B cell (primary cell): ENCODE measurements at regions of chr1 and their contacts with region 1.

Region 1: DNA sequence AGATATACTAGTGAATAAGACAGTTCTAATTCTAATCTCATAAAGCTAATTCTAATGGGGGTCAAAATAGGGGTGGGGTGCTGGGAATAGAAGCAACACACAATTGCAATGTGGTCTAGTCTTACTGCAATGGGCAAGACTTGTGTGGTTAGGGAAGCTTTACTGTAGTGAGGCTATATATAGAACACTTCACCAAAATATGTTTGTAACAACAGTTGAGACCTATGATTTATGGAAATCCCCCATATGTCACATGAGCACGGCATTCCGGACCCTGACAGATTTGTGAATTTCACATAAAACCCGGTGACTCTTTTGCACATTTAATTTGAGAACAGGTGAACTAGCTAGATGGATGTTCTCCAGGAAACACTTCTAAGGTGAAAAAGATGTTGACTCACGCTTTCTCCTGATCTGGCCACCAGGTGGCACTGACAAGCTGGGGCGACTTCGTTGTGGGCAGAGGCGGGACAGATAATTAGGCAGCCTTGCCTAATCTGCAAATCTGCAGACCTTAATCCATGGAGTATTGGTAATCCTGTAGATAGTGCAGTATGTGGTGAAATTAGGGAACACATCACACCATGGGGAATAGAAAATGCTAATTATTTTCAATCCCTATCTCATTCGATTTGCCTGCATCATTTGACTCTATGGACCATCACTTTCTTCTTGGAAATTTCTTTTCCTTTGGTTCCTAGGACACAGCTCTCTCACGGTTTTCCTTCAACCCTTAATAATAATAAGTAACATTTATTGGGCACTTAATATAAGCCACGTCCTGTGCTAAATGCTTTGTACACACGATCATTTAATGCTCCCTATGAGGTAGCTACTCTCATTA is 37.7 kb downstream of the KIAA0040 start:
- DNase-seq: peak; percentile 81
- ATAC-seq: peak; percentile 64
- H3K4me3 ChIP-seq: no peak overlapping the region
- H3K4me3 Mint-ChIP-seq: no peak overlapping the region
- H3K27ac ChIP-seq: no peak overlapping the region
- H3K27ac Mint-ChIP-seq: no peak overlapping the region
- H3K4me1 ChIP-seq: peaks cover 16 to 27% of the 10 kb centered on the region in 2 donors
- H3K4me1 Mint-ChIP-seq: peaks cover 34% of the 10 kb centered on the region
- H3K27me3 ChIP-seq: peaks cover 0 to 16% (median 7%) of the 10 kb centered on the region in 4 experiments
- H3K27me3 Mint-ChIP-seq: peaks cover 18% of the 10 kb centered on the region
- CTCF ChIP-seq: peak; percentile 92

Region 2: GRCh38 chr1:175169305-175170018 is 14.6 kb after region 1 on chr1:
- CTCF ChIA-PET with region 1: interaction called, 16 read pairs
- POLR2A ChIA-PET with region 1: no interaction called
- intact Hi-C with region 1: no loop called
- DNase-seq: no peak
- ATAC-seq: no peak
- H3K4me3 ChIP-seq: no peak overlapping the region
- H3K4me3 Mint-ChIP-seq: no peak overlapping the region
- H3K27ac ChIP-seq: peak overlapping the region in 1 of 2 donors; percentile 40
- H3K27ac Mint-ChIP-seq: peak overlapping the region; percentile 77
- H3K4me1 ChIP-seq: peaks cover 23 to 25% of the 10 kb centered on the region in 2 donors
- H3K4me1 Mint-ChIP-seq: peaks cover 67% of the 10 kb centered on the region
- H3K27me3 ChIP-seq: no peaks in the 10 kb centered on the region
- H3K27me3 Mint-ChIP-seq: no peaks in the 10 kb centered on the region
- CTCF ChIP-seq: no peak

Region 3: DNA sequence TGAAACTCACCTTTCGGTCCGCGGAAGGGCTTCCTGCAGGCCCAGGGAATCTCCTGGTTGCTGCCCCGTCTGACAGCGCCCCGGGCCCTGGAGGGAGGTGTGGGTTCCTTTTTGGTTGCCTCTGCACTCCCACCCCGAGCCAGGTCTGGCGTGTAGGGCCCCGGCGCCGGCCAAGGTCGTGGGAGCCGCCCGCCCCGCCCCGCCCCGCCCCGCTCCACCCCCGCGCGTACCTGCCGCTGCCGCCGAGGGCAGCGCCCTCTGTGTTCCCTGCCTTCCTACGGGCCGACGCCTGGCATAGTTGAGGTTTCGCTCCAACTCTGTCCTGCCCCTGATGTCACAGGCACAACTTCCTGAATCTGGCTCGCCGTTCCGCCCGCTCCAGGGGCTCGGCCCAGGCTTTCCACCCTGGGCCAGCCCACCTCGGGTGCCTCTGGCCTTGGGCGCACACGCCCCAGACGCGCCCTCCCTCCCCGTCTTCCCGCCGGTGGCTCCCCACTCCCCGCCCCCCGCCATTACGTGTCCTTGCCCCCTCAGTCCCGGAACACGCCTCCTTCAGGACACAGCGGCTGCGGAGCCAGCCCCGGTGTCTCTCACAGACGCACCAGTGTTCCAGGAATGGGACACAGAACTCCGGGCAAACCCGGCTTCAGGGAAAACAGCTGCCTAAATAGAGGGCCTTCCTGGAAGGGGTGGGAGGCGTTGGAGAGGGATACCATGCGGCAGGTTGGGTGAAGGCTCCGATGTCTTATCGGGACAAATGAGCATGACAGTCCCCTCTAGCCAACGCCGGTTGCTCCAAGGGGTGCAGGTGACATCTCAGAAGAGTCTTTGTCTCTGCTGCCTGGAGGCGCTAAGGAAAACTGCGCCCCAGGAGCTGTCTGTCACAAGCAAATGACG is 38.0 kb after region 1 on chr1 and contains the start of gene KIAA0040:
- CTCF ChIA-PET with region 1: interaction called, 90 read pairs
- POLR2A ChIA-PET with region 1: interaction called, 3 read pairs
- intact Hi-C with region 1: loop called (anchors 2 kb)
- DNase-seq: peak; percentile 84
- ATAC-seq: peak; percentile 61
- H3K4me3 ChIP-seq: peak within 1 kb of the TSS; percentile 71 to 99 (median 97)
- H3K4me3 Mint-ChIP-seq: peak within 1 kb of the TSS; percentile 99
- H3K27ac ChIP-seq: peak within 1 kb of the TSS; percentile 69 to 81
- H3K27ac Mint-ChIP-seq: peak within 1 kb of the TSS; percentile 96
- H3K4me1 ChIP-seq: peaks cover 81 to 87% of the 10 kb centered on the region in 2 donors
- H3K4me1 Mint-ChIP-seq: peaks cover 88% of the 10 kb centered on the region
- H3K27me3 ChIP-seq: no peaks in the 10 kb centered on the region
- H3K27me3 Mint-ChIP-seq: no peaks in the 10 kb centered on the region
- CTCF ChIP-seq: no peak
- total RNA-seq, gene KIAA0040: 84.2 and 93.6 TPM in 2 replicates

Region 4: GRCh38 chr1:175307160-175307559 is 152.3 kb after region 1 on chr1:
- CTCF ChIA-PET with region 1: interaction called, 468 read pairs
- POLR2A ChIA-PET with region 1: no interaction called
- intact Hi-C with region 1: no loop called
- DNase-seq: peak; percentile 40
- ATAC-seq: peak; percentile 66
- H3K4me3 ChIP-seq: no peak overlapping the region
- H3K4me3 Mint-ChIP-seq: peak overlapping the region; percentile 29
- H3K27ac ChIP-seq: no peak overlapping the region
- H3K27ac Mint-ChIP-seq: peak overlapping the region; percentile 51
- H3K4me1 ChIP-seq: peaks cover 24 to 26% of the 10 kb centered on the region in 2 donors
- H3K4me1 Mint-ChIP-seq: peaks cover 35% of the 10 kb centered on the region
- H3K27me3 ChIP-seq: no peaks in the 10 kb centered on the region
- H3K27me3 Mint-ChIP-seq: no peaks in the 10 kb centered on the region
- CTCF ChIP-seq: no peak

Region 5: DNA sequence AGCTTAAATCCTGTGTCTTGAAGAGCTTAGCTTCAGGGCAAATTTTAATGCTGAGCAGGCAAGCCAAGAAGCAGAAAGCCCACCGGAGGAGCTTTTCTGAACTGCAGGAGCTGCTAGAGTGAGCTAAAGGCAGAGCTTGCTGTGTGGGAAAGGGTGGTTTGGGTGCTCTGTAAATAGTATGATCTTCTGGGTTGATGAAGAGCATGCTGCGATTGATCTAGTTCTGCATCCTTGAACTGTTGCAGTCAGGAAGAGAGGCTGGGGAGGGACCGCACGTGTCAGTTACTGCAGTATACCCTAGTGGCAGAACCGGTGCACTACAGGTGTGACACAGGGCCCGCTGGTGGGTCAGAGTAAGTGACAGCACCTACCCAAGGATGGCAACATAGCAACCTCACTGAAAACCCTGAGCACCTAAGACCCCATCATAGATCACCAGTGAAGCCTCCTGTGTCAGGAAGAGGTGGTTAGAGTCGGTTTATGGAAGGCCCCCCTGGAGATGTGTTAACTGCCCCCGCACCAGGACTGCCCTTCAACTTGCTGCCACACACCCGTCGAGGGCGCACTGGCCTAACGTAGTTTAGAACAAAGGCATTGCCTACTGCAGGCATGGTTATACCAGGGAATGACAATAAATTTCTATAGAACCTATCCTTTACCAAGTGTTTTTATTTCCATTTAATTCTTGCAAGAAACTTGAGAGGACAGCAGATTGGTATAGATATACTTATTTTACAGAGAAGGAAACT is 183.7 kb after region 1 on chr1:
- CTCF ChIA-PET with region 1: interaction called, 82 read pairs
- POLR2A ChIA-PET with region 1: no interaction called
- intact Hi-C with region 1: loop called (anchors 1 kb)
- DNase-seq: peak; percentile 66
- ATAC-seq: peak; percentile 97
- H3K4me3 ChIP-seq: no peak overlapping the region
- H3K4me3 Mint-ChIP-seq: no peak overlapping the region
- H3K27ac ChIP-seq: no peak overlapping the region
- H3K27ac Mint-ChIP-seq: no peak overlapping the region
- H3K4me1 ChIP-seq: peaks cover 0 to 2% of the 10 kb centered on the region in 2 donors
- H3K4me1 Mint-ChIP-seq: peaks cover 2% of the 10 kb centered on the region
- H3K27me3 ChIP-seq: peaks cover 0 to 4% (median 1%) of the 10 kb centered on the region in 4 experiments
- H3K27me3 Mint-ChIP-seq: peaks cover 13% of the 10 kb centered on the region
- CTCF ChIP-seq: peak; percentile 80

Region 6: GRCh38 chr1:175742790-175743459 is 588.1 kb after region 1 on chr1:
- CTCF ChIA-PET with region 1: interaction called, 17 read pairs
- POLR2A ChIA-PET with region 1: no interaction called
- intact Hi-C with region 1: loop called (anchors 5 kb)
- DNase-seq: peak; percentile 5
- ATAC-seq: no peak
- H3K4me3 ChIP-seq: no peak overlapping the region
- H3K4me3 Mint-ChIP-seq: no peak overlapping the region
- H3K27ac ChIP-seq: no peak overlapping the region
- H3K27ac Mint-ChIP-seq: no peak overlapping the region
- H3K4me1 ChIP-seq: peaks cover 0 to 4% of the 10 kb centered on the region in 2 donors
- H3K4me1 Mint-ChIP-seq: peaks cover 3% of the 10 kb centered on the region
- H3K27me3 ChIP-seq: peaks cover 0 to 19% (median 1%) of the 10 kb centered on the region in 4 experiments
- H3K27me3 Mint-ChIP-seq: peaks cover 38% of the 10 kb centered on the region
- CTCF ChIP-seq: no peak

Region 7: GRCh38 chr1:175873290-175873935 is 718.6 kb after region 1 on chr1:
- CTCF ChIA-PET with region 1: no interaction called
- POLR2A ChIA-PET with region 1: no interaction called
- intact Hi-C with region 1: no loop called
- DNase-seq: no peak
- ATAC-seq: no peak
- H3K4me3 ChIP-seq: no peak overlapping the region
- H3K4me3 Mint-ChIP-seq: no peak overlapping the region
- H3K27ac ChIP-seq: no peak overlapping the region
- H3K27ac Mint-ChIP-seq: no peak overlapping the region
- H3K4me1 ChIP-seq: no peaks in the 10 kb centered on the region
- H3K4me1 Mint-ChIP-seq: no peaks in the 10 kb centered on the region
- H3K27me3 ChIP-seq: no peaks in the 10 kb centered on the region
- H3K27me3 Mint-ChIP-seq: no peaks in the 10 kb centered on the region
- CTCF ChIP-seq: no peak

Region 8: DNA sequence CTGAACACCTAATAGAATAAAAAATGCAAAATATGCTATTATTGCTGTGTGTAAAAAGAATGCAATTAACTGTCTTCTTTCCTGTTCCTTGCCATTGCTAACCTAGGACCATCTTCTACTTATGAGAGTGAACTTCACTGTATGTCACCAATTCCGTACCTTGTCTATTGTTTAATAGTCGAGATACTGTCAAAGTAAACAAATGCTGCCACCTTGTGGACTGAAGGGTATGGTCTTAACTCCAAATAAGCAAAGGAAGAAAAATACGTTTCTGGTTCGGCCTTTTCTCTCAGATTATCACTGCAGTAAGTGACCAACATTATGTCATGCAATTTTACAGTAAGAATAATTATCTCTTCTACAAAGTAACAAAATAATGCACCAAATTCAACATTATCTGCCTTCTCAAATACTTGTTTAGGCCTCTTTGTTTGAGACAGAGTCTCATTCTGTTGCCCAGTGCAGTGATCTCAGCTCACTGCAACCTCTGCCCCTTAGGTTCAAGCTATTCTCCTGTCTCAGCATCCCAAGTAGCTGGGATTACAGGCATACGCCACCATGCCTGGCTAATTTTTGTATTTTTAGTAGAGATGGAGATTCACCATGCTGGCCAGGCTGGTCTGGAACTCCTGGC is 918.8 kb after region 1 on chr1:
- CTCF ChIA-PET with region 1: interaction called, 7 read pairs
- POLR2A ChIA-PET with region 1: no interaction called
- intact Hi-C with region 1: loop called (anchors 2 kb)
- DNase-seq: peak; percentile 58
- ATAC-seq: no peak
- H3K4me3 ChIP-seq: no peak overlapping the region
- H3K4me3 Mint-ChIP-seq: no peak overlapping the region
- H3K27ac ChIP-seq: no peak overlapping the region
- H3K27ac Mint-ChIP-seq: no peak overlapping the region
- H3K4me1 ChIP-seq: no peaks in the 10 kb centered on the region
- H3K4me1 Mint-ChIP-seq: peaks cover 3% of the 10 kb centered on the region
- H3K27me3 ChIP-seq: no peaks in the 10 kb centered on the region
- H3K27me3 Mint-ChIP-seq: no peaks in the 10 kb centered on the region
- CTCF ChIP-seq: peak; percentile 69